Mammary epithelial cell (primary cell): ENCODE measurements at regions of chr3 and their contacts with region 1.

Region 1: GRCh38 chr3:62318750-62319569 is 54.4 kb downstream of the FEZF2 start:
- DNase-seq: peak; percentile 87
- H3K4me3 ChIP-seq: peak overlapping the region; percentile 65 to 70 (median 67)
- H3K27ac ChIP-seq: peak overlapping the region; percentile 45
- H3K4me1 ChIP-seq: no peaks in the 10 kb centered on the region
- H3K27me3 ChIP-seq: no peaks in the 10 kb centered on the region
- CTCF ChIP-seq: no peak

Region 2: DNA sequence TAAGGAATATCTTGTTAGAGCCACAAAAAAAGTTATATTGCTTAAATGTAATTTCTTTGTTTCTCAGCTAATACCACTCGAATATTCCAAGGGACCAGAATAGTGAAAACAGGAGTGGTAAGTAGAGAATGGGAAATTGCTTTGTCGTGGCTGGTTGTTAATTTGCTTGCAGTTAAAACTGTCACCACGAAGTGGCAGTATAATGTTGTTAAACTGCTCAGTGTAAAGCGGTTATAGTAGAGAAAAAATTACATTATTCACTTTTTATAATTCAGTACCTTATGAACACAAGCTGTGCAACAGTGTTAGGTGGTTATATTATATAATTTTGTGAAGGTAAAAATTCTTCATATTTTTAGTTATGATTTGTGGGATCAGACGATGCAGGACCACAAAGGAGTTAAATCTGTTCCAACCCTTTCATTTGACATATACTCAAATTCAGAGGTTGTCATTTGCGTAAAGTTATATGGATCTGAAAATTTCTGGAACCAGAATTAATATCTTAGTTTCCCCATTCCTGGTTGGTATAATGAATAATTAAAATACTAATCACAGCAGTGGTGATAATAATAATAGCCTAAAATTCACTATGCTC is 117.4 kb before region 1 on chr3:
- CTCF ChIA-PET with region 1: no interaction called
- dilution Hi-C with region 1: no loop called
- in situ Hi-C with region 1: no loop called
- intact Hi-C with region 1: loop called (anchors 2 kb)
- DNase-seq: peak; percentile 14
- H3K4me3 ChIP-seq: no peak overlapping the region
- H3K27ac ChIP-seq: no peak overlapping the region
- H3K4me1 ChIP-seq: no peaks in the 10 kb centered on the region
- H3K27me3 ChIP-seq: no peaks in the 10 kb centered on the region
- CTCF ChIP-seq: peak; percentile 55 to 63